WTC11 (cell line): ENCODE measurements at regions of chr13 and their contacts with region 1.

Region 1: DNA sequence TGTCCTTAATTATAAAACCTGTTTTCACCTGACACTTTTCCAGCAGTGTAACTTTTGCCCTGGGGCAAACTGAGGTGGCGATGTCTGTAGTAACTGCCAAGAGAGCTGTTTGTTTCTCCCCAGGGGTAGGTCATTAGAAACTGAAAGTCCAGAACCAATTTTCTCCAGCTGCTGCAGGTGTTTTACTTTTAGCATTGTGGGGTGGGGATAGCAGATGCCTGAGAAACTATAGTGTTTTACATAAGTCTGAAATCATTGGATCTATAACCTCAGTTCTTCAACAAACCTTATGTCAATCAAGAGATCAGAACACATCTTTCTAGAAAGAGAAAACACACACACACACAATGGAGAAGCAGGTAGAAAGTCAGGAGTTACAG is 92.7 kb downstream of the LHFPL6 start:
- DNase-seq: no peak
- ATAC-seq: peak; percentile 68
- H3K4me3 Mint-ChIP-seq: no peak overlapping the region
- H3K27ac Mint-ChIP-seq: no peak overlapping the region
- H3K4me1 Mint-ChIP-seq: peaks cover 36% of the 10 kb centered on the region
- H3K27me3 Mint-ChIP-seq: peaks cover 2% of the 10 kb centered on the region
- CTCF ChIP-seq: no peak

Region 2: GRCh38 chr13:39566216-39566869 is 56.0 kb after region 1 on chr13:
- CTCF ChIA-PET with region 1: no interaction called
- POLR2A ChIA-PET with region 1: interaction called, 11 read pairs
- DNase-seq: no peak
- ATAC-seq: no peak
- H3K4me3 Mint-ChIP-seq: no peak overlapping the region
- H3K27ac Mint-ChIP-seq: peak overlapping the region; percentile 64; the same call in 1 of the 2 replicates
- H3K4me1 Mint-ChIP-seq: peaks cover 33% of the 10 kb centered on the region
- H3K27me3 Mint-ChIP-seq: no peaks in the 10 kb centered on the region
- CTCF ChIP-seq: no peak